ENCODE measurements at regions of chr21 and their contacts with region 1.

Region 1: GRCh38 chr21:32508558-32508957 is 76.8 kb downstream of the TCP10L start:
- DNase-seq: no peak
- ATAC-seq: no peak
- H3K4me3 ChIP-seq: no peak overlapping the region
- H3K4me3 Mint-ChIP-seq: no peak overlapping the region
- H3K27ac ChIP-seq: no peak overlapping the region
- H3K27ac Mint-ChIP-seq: no peak overlapping the region
- H3K4me1 ChIP-seq: no peaks in the 10 kb centered on the region
- H3K4me1 Mint-ChIP-seq: peaks cover 2% of the 10 kb centered on the region
- H3K27me3 ChIP-seq: no peaks in the 10 kb centered on the region
- H3K27me3 Mint-ChIP-seq: no peaks in the 10 kb centered on the region
- CTCF ChIP-seq: no peak

Region 2: DNA sequence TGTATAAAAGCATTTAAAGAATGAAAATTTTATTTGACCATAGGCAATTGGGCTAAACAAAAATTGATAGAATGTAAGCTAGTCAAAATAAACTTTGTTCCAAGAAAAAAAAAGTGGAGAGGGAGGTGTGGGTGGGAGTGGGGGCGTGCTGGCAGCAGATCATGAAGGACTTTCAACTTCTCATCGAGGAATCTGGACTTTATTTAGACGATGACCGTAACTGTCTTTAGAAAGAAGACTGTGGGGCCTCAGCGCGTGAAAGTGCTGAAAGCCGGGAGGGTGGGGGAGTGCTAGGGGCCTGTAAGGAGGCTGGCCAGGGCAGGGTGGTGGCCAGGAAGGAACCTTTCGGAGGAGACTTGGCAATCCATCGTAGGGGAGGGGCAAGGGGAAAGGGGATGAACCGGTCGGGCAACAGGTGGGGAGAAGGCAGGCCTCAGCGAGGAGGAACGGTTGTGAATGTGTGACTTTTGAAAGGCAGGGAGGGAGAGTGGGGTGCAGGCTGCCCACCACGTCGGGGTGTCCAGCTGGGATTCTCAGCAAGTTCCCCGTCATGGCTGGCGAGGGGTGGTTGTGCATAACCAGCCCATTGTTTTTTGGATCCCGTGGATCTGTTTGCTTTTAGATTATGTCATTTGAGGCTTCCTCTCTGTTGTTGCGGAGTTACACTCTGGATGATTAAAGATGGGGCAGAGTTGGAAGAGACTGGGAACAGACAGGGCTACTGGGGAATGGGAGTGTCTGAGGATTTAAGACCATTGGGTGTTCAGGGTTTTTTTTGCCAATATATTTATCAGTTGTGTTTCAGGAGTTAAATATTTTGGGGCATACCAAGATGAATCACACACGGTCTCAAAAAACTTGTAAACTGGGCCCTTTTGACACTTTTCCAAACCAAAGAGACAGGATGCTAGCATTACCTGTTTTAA is 600.2 kb before region 1 on chr21:
- CTCF ChIA-PET with region 1: no interaction called
- POLR2A ChIA-PET with region 1: no interaction called
- intact Hi-C with region 1: no loop called
- DNase-seq: no peak
- ATAC-seq: no peak
- H3K4me3 ChIP-seq: no peak overlapping the region
- H3K4me3 Mint-ChIP-seq: no peak overlapping the region
- H3K27ac ChIP-seq: no peak overlapping the region
- H3K27ac Mint-ChIP-seq: no peak overlapping the region
- H3K4me1 ChIP-seq: no peaks in the 10 kb centered on the region
- H3K4me1 Mint-ChIP-seq: no peaks in the 10 kb centered on the region
- H3K27me3 ChIP-seq: no peaks in the 10 kb centered on the region
- H3K27me3 Mint-ChIP-seq: peaks cover 31% of the 10 kb centered on the region
- CTCF ChIP-seq: no peak

Region 3: DNA sequence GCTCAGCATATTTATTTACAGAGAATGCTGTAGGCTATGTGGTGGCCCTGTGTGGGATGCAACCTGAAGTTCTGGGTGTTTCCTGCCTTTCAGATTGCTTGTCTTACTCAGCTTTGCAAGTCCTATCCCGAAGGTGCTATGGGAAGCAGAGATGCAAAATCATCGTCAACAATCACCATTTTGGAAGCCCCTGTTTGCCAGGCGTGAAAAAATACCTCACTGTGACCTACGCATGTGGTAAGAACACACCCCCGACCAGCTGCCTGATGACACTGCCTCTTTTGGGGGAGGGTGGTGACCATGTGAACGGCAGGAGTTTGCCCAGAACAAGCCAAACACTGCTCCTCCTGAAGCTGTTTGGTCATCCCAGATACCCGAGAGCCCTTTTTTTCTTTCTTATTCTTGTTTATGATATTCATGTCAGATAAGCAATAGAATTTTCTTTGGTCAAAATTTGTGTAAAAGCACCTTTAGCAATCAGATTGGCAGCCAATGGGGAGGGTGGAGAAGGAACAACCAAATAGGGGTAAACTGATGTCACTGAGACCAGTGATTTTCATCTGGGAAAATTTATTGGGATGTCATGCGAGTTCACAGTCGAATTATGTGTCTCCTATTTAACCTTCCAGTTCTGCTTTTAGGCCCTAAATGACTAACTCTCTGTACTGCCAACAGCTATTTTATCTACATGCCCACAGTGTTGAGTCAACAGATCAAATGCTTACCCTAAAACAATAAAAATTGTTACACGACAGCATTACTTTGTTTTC is 13.4 kb before region 1 on chr21:
- CTCF ChIA-PET with region 1: no interaction called
- POLR2A ChIA-PET with region 1: no interaction called
- intact Hi-C with region 1: loop called in 1 of 2 experiments (anchors 2 kb)
- DNase-seq: no peak
- ATAC-seq: no peak
- H3K4me3 ChIP-seq: no peak overlapping the region
- H3K4me3 Mint-ChIP-seq: no peak overlapping the region
- H3K27ac ChIP-seq: no peak overlapping the region
- H3K27ac Mint-ChIP-seq: no peak overlapping the region
- H3K4me1 ChIP-seq: peaks cover 15% of the 10 kb centered on the region
- H3K4me1 Mint-ChIP-seq: peaks cover 19% of the 10 kb centered on the region
- H3K27me3 ChIP-seq: no peaks in the 10 kb centered on the region
- H3K27me3 Mint-ChIP-seq: no peaks in the 10 kb centered on the region
- CTCF ChIP-seq: no peak

Measured in CD8-positive, alpha-beta T cell (primary cell).